ENCODE measurements at regions of chr7 and their contacts with region 1.

Region 1: DNA sequence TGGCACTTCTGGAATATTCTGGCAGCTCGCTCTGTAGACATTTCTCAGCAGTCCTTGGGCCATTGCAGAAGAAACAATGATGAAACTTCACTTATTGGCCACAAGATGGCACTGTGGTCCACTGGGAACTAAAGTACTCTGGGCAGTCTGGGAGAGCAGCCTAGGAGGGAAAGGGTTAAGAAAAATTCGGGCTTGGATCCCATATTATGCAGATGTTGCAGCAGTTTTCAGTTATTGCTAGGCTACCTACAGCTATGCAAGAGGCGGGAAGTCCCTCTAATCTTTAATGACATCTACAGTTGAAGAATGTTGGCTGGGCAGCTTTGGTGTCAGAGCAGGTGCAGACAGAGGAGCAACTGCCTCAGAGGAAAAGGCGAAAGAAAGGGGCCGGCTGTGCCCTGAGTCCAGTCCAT is 201.7 kb upstream of the PRSS58 start:
- DNase-seq: peak in 1 of 2 experiments; percentile 53
- H3K4me3 ChIP-seq: no peak overlapping the region
- H3K27ac ChIP-seq: no peak overlapping the region
- H3K4me1 ChIP-seq: no peaks in the 10 kb centered on the region
- H3K27me3 ChIP-seq: no peaks in the 10 kb centered on the region
- CTCF ChIP-seq: peak; percentile 33 to 82 (median 81)
- EP300 ChIP-seq: no peak
- POLR2A ChIP-seq: no peak
- RAD21 ChIP-seq: peak; percentile 65 to 74

Region 2: DNA sequence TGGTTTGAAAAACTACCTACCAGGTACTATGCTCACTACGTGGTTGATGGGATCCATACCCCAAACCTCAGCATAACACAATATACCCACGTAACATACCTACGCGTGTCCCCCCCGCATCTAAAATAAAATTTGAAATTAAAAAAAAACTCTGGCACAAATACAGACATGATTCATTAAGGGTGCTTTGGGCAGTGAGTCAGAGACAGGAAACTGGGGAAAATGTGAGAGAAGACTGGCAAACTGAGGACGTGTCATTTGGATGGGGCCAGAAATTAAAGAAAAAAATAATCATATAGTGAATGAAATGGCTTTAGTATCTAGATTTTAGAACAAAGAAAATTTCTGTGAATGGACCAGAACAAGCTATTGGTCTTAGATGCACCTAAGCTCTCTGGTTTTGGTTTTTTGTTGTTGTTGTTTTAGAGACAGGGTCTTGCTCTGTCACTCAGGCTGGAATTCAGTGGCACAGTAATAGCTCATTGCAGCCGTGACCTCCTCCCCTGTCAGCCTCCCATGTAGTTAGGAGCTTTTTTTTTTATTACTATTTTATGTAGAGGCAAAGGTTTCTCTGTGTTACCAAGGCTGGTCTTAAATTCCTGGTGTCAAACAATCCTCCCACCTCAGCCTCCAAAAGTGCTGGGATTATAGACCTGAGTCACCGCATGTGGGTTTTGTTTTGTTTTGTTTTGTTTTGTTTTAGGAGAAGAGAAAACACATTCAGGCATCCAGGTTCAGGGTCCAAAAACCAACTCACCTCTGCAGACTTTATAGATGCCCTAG is 195.8 kb before region 1 on chr7:
- CTCF ChIA-PET with region 1: no interaction called
- POLR2A ChIA-PET with region 1: no interaction called
- DNase-seq: no peak
- H3K4me3 ChIP-seq: no peak overlapping the region
- H3K27ac ChIP-seq: no peak overlapping the region
- H3K4me1 ChIP-seq: no peaks in the 10 kb centered on the region
- H3K27me3 ChIP-seq: no peaks in the 10 kb centered on the region
- CTCF ChIP-seq: no peak
- EP300 ChIP-seq: no peak
- POLR2A ChIP-seq: no peak
- RAD21 ChIP-seq: no peak

Region 3: GRCh38 chr7:142405122-142405765 is 54.3 kb before region 1 on chr7:
- CTCF ChIA-PET with region 1: interaction called, 11 read pairs
- POLR2A ChIA-PET with region 1: no interaction called
- DNase-seq: no peak
- H3K4me3 ChIP-seq: no peak overlapping the region
- H3K27ac ChIP-seq: no peak overlapping the region
- H3K4me1 ChIP-seq: no peaks in the 10 kb centered on the region
- H3K27me3 ChIP-seq: no peaks in the 10 kb centered on the region
- CTCF ChIP-seq: no peak
- EP300 ChIP-seq: no peak
- POLR2A ChIP-seq: no peak
- RAD21 ChIP-seq: no peak

Region 4: DNA sequence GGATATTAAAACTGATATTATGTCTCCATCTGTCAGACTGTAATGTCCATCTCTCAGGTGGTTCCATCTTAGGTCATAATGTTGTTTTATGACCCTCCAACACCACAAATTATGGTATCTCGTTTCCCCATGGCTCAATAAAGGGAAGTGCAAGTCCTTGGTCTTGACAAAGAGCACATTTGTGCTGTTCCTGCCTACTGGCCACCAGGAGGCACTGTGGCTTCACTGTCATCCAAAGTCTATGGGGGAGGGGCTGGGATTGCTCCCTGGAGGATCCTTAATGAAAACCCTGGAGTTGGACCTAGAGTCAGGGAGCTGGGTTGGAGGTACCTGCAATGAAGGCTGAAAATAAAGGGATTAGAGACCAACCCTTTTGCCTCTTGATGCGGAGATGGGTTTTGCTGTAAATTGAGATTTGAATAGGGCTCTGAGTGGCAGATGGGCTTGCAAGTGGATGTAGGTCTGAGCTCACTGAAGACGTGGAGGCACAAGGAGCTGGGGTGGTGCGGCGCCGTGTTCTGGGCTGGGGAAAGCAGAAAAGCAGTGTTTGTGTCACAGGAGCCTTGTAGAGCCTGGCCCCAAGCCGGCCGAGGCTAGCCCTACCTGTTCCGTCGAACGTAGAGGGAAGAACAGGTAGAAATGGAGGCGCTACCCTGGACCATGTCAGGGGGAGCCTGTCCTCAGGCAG is 21.2 kb before region 1 on chr7:
- CTCF ChIA-PET with region 1: interaction called, 260 read pairs
- POLR2A ChIA-PET with region 1: no interaction called
- DNase-seq: peak in 1 of 2 experiments; percentile 61
- H3K4me3 ChIP-seq: no peak overlapping the region
- H3K27ac ChIP-seq: no peak overlapping the region
- H3K4me1 ChIP-seq: peaks cover 0 to 10% (median 0%) of the 10 kb centered on the region in 4 experiments; a peak in 1 of 7 replicates
- H3K27me3 ChIP-seq: no peaks in the 10 kb centered on the region
- CTCF ChIP-seq: peak; percentile 95 to 99 (median 95)
- EP300 ChIP-seq: 0 out of 3 replicates have a peak, but pooled peaks of 1 of the 2 experiments have one; percentile 23
- POLR2A ChIP-seq: no peak
- RAD21 ChIP-seq: peak; percentile 70 to 83

Region 5: GRCh38 chr7:142496545-142497041 is 37.0 kb after region 1 on chr7:
- CTCF ChIA-PET with region 1: interaction called, 31 read pairs
- POLR2A ChIA-PET with region 1: no interaction called
- DNase-seq: no peak
- H3K4me3 ChIP-seq: no peak overlapping the region
- H3K27ac ChIP-seq: no peak overlapping the region
- H3K4me1 ChIP-seq: no peaks in the 10 kb centered on the region
- H3K27me3 ChIP-seq: no peaks in the 10 kb centered on the region
- CTCF ChIP-seq: peak; percentile 58 to 83 (median 78)
- EP300 ChIP-seq: no peak
- POLR2A ChIP-seq: no peak
- RAD21 ChIP-seq: peak; percentile 37 to 61

Region 6: DNA sequence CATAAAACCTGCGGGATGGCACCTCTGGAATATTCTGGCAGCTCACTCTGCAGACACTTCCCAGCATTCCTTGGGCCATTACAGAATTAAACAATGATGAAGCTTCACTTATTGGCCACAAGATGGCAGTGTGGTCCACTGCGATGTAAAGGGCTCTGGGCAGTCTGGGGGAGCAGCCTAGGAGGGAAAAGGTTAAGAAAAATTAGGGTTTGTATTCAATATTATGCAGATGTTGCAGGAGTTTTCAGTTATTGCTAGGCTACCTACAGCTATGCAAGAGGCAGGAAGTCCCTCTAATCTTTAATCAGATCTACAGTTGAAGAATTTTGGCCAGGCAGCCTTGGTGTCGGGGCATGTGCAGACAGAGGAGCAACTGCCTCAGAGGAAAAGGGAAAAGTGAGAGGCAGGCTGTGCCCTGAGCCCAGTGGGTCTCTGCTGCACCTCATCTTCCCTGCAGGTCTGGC is 56.5 kb after region 1 on chr7:
- CTCF ChIA-PET with region 1: interaction called, 220 read pairs
- POLR2A ChIA-PET with region 1: no interaction called
- DNase-seq: peak in 1 of 2 experiments; percentile 56
- H3K4me3 ChIP-seq: no peak overlapping the region
- H3K27ac ChIP-seq: no peak overlapping the region
- H3K4me1 ChIP-seq: peaks cover 0 to 3% (median 0%) of the 10 kb centered on the region in 4 experiments; a peak in 1 of 7 replicates
- H3K27me3 ChIP-seq: no peaks in the 10 kb centered on the region
- CTCF ChIP-seq: peak; percentile 53 to 81 (median 75)
- EP300 ChIP-seq: no peak
- POLR2A ChIP-seq: no peak
- RAD21 ChIP-seq: peak; percentile 61 to 67

Region 7: GRCh38 chr7:142866361-142867058 is 407.0 kb after region 1 on chr7:
- CTCF ChIA-PET with region 1: no interaction called
- POLR2A ChIA-PET with region 1: no interaction called
- DNase-seq: peak in 1 of 2 experiments; percentile 82
- H3K4me3 ChIP-seq: no peak overlapping the region
- H3K27ac ChIP-seq: no peak overlapping the region
- H3K4me1 ChIP-seq: peaks cover 3 to 10% (median 9%) of the 10 kb centered on the region in 4 experiments; a peak in 6 of 7 replicates
- H3K27me3 ChIP-seq: no peaks in the 10 kb centered on the region
- CTCF ChIP-seq: peak; percentile 79 to 84 (median 83)
- EP300 ChIP-seq: no peak
- POLR2A ChIP-seq: no peak
- RAD21 ChIP-seq: peak; percentile 67 to 77

Measured in H1 (cell line).